GM12878 (cell line): ENCODE measurements at regions of chr16 and their contacts with region 1.

Region 1: DNA sequence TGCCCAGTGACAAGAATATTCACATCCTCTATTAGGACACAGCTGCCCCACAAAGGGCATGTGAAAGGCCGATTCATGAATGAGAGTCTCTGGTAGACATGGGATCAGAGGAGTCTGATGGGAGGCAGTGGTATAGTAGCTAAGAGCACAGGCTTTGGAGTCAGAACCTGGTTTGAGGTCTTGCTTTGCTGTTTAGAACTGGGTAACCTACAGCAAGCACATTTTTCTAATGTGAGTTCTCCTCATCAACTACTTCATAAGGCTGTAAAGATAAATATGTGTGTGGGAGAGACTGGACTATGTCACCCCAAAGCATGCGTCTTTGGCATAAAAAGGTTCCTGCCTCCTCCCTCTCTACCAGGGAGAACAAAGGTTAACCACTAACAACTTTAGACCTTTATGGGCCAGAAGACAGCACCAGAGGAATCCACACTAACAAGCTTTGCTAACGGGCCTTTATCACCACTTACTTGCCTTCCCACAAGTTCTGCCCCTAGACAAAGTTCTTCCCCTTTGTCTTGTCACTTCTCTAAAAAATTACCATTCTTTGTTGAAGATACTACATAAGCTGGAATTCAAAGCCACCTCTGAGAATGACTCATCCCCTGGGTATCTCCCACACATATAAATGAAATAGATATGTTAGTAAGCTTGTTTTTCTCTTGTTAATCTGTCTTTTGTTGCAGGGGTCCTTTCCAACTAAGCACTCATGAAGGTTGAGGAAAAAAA is 21.1 kb downstream of the CDR2 start:
- DNase-seq: peak; percentile 63
- ATAC-seq: peak; percentile 69
- H3K4me3 ChIP-seq: no peak overlapping the region
- H3K27ac ChIP-seq: peak overlapping the region; percentile 79
- H3K4me1 ChIP-seq: peaks cover 40% of the 10 kb centered on the region
- H3K27me3 ChIP-seq: no peaks in the 10 kb centered on the region
- CTCF ChIP-seq: no peak
- EP300 ChIP-seq: no peak; a peak in 1 of 4 replicates
- POLR2A ChIP-seq: no peak
- RAD21 ChIP-seq: no peak

Region 2: GRCh38 chr16:22369221-22369811 is 16.0 kb after region 1 on chr16:
- CTCF ChIA-PET with region 1: interaction called, 26 read pairs
- POLR2A ChIA-PET with region 1: interaction called, 185 read pairs
- RAD21 ChIA-PET with region 1: interaction called, 64 read pairs
- SMC1A ChIA-PET with region 1: interaction called, 205 read pairs
- in situ Hi-C with region 1: no loop called
- intact Hi-C with region 1: no loop called
- DNase-seq: no peak
- ATAC-seq: peak; percentile 36
- H3K4me3 ChIP-seq: 0 out of 2 replicates have a peak overlapping the region, but pooled peaks have one; percentile 15
- H3K27ac ChIP-seq: peak overlapping the region; percentile 60
- H3K4me1 ChIP-seq: peaks cover 19% of the 10 kb centered on the region
- H3K27me3 ChIP-seq: no peaks in the 10 kb centered on the region
- CTCF ChIP-seq: no peak
- EP300 ChIP-seq: no peak
- POLR2A ChIP-seq: no peak
- RAD21 ChIP-seq: no peak

Region 3: GRCh38 chr16:22374311-22375116 is 21.2 kb after region 1 on chr16 and contains the start of gene CDR2:
- CTCF ChIA-PET with region 1: interaction called, 26 read pairs
- POLR2A ChIA-PET with region 1: interaction called, 185 read pairs
- RAD21 ChIA-PET with region 1: interaction called, 64 read pairs
- SMC1A ChIA-PET with region 1: interaction called, 205 read pairs
- in situ Hi-C with region 1: no loop called
- intact Hi-C with region 1: no loop called
- DNase-seq: peak; percentile 81
- ATAC-seq: peak; percentile 97
- H3K4me3 ChIP-seq: peak within 1 kb of the TSS; percentile 89
- H3K27ac ChIP-seq: peak within 1 kb of the TSS; percentile 77
- H3K4me1 ChIP-seq: peaks cover 13% of the 10 kb centered on the region; the same call in 1 of the 2 replicates
- H3K27me3 ChIP-seq: no peaks in the 10 kb centered on the region
- CTCF ChIP-seq: no peak
- EP300 ChIP-seq: no peak
- POLR2A ChIP-seq: peak; percentile 97
- RAD21 ChIP-seq: no peak
- polyA plus RNA-seq, gene CDR2: 4.8 to 5.5 TPM

Region 4: GRCh38 chr16:22641131-22641628 is 287.8 kb after region 1 on chr16:
- CTCF ChIA-PET with region 1: no interaction called
- POLR2A ChIA-PET with region 1: no interaction called
- RAD21 ChIA-PET with region 1: no interaction called
- SMC1A ChIA-PET with region 1: no interaction called
- in situ Hi-C with region 1: no loop called
- intact Hi-C with region 1: no loop called
- DNase-seq: no peak
- ATAC-seq: no peak
- H3K4me3 ChIP-seq: no peak overlapping the region
- H3K27ac ChIP-seq: no peak overlapping the region
- H3K4me1 ChIP-seq: no peaks in the 10 kb centered on the region
- H3K27me3 ChIP-seq: no peaks in the 10 kb centered on the region
- CTCF ChIP-seq: no peak
- EP300 ChIP-seq: no peak
- POLR2A ChIP-seq: no peak
- RAD21 ChIP-seq: no peak